CD4-positive, alpha-beta memory T cell (primary cell): ENCODE measurements at regions of chr10 and their contacts with region 1.

Region 1: DNA sequence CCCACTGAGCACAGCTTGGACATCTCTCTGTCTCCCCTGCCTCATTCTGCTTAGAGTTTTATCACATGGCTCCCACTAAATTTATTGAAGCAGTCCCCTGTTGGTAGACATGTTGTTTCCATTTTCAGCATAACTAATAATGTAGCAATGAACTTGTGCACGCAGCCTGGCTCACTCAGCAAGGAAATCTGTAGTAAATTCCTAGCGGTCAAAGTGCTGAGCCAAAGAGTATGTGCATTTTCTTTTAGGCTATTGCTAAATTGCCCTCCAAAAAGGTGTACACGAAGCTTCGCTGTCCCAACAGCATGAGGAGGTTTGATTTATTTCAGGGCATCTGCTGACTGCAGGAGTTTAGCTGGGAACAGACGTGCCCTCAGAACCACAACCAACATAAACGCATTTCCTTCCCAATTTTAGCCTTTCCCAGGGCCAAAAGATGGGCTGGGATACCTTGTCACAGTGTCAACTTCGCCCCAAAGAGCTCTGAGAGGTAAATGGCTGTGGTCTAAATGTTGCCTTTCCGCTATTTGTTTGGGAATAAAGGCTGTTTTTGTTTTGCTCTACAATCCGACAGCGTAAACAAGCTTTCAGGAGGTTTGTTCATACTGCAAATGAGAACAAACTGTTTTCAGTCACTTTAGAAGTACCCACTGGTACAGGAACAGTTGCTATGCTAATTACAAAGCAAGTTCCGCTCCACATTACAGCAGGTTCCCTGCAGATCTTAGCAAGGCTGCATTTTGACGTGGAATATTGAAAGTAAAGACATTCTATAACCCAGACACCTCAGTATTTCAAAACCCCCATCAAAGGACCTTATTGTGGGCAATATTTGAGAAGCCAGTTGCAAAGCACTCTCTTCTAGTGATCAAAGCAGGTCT is 16.8 kb downstream of the VSIR start:
- DNase-seq: peak; percentile 5 to 76 (median 73)
- H3K4me3 ChIP-seq: peak overlapping the region in 1 of 2 donors; percentile 35
- H3K4me3 Mint-ChIP-seq: peak overlapping the region; percentile 54 to 87 (median 76)
- H3K27ac ChIP-seq: peak overlapping the region; percentile 53
- H3K27ac Mint-ChIP-seq: peak overlapping the region; percentile 95 to 99 (median 96)
- H3K4me1 ChIP-seq: peaks cover 94% of the 10 kb centered on the region
- H3K4me1 Mint-ChIP-seq: peaks cover 68 to 100% (median 83%) of the 10 kb centered on the region in 4 donors
- H3K27me3 ChIP-seq: no peaks in the 10 kb centered on the region
- H3K27me3 Mint-ChIP-seq: no peaks in the 10 kb centered on the region

Region 2: GRCh38 chr10:71740069-71740468 is 16.5 kb before region 1 on chr10:
- CTCF ChIA-PET with region 1: interaction called, 25 read pairs
- POLR2A ChIA-PET with region 1: interaction called, 1,191 read pairs
- intact Hi-C with region 1: no loop called
- DNase-seq: no peak
- H3K4me3 ChIP-seq: no peak overlapping the region
- H3K4me3 Mint-ChIP-seq: peak overlapping the region in 7 of 8 donors; percentile 26 to 74 (median 59)
- H3K27ac ChIP-seq: peak overlapping the region; percentile 11
- H3K27ac Mint-ChIP-seq: peak overlapping the region; percentile 58 to 97 (median 89)
- H3K4me1 ChIP-seq: peaks cover 100% of the 10 kb centered on the region
- H3K4me1 Mint-ChIP-seq: peaks cover 76 to 100% (median 93%) of the 10 kb centered on the region in 4 donors
- H3K27me3 ChIP-seq: no peaks in the 10 kb centered on the region
- H3K27me3 Mint-ChIP-seq: no peaks in the 10 kb centered on the region